Left ventricle myocardium inferior (tissue), 1 donor: ENCODE measurements at regions of chr21 and their contacts with region 1.

Region 1: DNA sequence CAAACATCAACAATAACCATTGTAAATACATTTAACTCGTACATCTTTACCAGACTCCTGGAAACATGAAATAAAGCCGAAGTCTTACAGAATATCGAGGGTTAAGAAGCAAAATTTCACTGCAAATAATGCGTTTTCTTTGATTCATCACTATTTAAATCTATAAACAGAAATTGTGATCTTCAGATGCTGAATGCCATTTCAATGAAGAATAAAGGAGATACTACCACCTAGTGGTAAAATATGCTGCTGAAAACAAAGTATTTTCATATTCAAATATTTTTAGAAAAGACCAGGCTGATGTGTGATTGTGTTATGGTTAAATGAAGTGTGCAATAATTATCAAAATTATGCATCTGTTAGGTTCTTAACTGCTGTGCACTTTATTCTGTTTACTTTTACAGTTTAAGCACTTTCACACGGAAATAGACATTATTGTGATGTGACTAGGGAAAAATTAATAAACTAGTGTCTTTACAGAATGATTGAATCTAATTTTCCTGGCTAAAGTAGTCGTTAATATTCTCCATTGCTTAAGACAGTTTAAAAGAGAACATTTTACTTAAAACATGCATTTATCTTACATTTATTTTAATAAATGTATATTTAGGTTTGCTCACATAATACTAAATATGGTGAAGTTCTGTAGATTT is 1093.1 kb downstream of the MRPL39 start:
- DNase-seq: no peak
- H3K4me3 ChIP-seq: no peak overlapping the region
- H3K27ac ChIP-seq: no peak overlapping the region
- H3K4me1 ChIP-seq: no peaks in the 10 kb centered on the region
- H3K27me3 ChIP-seq: no peaks in the 10 kb centered on the region
- CTCF ChIP-seq: peak; percentile 62

Region 2: GRCh38 chr21:23853796-23854379 is 660.3 kb before region 1 on chr21:
- intact Hi-C with region 1: loop called (anchors 10 kb)
- DNase-seq: no peak
- H3K4me3 ChIP-seq: no peak overlapping the region
- H3K27ac ChIP-seq: no peak overlapping the region
- H3K4me1 ChIP-seq: no peaks in the 10 kb centered on the region
- H3K27me3 ChIP-seq: peaks cover 8% of the 10 kb centered on the region
- CTCF ChIP-seq: peak; percentile 59